ENCODE measurements at regions of chr5 and their contacts with region 1.

Region 1: DNA sequence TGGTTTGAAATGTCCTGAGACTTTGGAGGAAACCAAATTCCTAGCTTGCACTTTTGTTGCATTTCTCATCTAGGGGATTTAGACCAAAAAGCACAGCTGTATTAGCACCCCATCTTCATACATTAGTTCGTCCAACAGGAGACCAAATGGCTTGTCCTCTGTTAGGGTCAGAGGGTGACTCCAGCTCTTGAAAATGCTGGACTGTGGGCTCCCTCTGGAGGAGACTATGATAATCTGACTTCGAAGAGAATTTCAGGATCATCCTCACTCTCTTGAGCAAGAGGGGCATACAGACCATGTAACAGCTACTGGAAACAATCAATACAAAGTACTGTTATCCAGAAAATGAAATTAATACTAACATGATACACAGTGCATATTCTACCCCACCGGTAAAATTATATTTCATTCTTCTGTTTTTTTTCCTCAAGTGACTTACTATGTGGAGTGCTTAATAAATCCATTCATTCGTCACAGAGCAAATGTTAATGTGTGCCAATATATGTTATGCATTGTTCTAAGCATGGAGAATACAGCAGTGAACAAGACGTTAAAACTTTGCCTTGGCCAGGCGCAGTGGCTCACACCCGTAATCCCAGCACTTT is 63.7 kb upstream of the PPP2CA start:
- DNase-seq: peak; percentile 89
- H3K4me3 Mint-ChIP-seq: no peak overlapping the region
- H3K27ac Mint-ChIP-seq: no peak overlapping the region
- H3K4me1 Mint-ChIP-seq: no peaks in the 10 kb centered on the region
- H3K27me3 Mint-ChIP-seq: peaks cover 17% of the 10 kb centered on the region
- CTCF ChIP-seq: peak; percentile 95

Region 2: DNA sequence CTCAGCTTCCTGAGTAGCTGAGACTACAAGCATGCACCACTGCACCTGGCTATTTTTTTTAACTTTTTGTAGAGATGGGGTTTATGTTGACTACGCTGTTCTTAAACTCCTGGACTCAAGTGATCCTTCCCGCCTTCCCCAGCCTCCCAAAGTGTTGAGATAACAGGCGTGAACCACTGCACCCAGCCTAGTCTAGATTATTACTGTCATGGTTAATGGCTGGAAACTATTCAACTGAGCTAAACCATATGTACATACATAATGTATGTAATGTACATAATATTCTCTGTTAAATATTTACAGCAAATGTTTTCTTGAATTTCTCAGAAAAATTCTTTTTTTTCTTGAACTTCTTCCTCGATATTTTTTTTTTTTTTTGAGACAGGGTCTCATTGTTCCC is 85.0 kb before region 1 on chr5:
- CTCF ChIA-PET with region 1: interaction called, 35 read pairs
- POLR2A ChIA-PET with region 1: interaction called, 4 read pairs
- intact Hi-C with region 1: no loop called
- DNase-seq: no peak
- H3K4me3 Mint-ChIP-seq: no peak overlapping the region
- H3K27ac Mint-ChIP-seq: no peak overlapping the region
- H3K4me1 Mint-ChIP-seq: peaks cover 23% of the 10 kb centered on the region
- H3K27me3 Mint-ChIP-seq: no peaks in the 10 kb centered on the region
- CTCF ChIP-seq: no peak

Region 3: GRCh38 chr5:134209477-134210240 is 80.0 kb before region 1 on chr5:
- CTCF ChIA-PET with region 1: interaction called, 35 read pairs
- POLR2A ChIA-PET with region 1: interaction called, 4 read pairs
- intact Hi-C with region 1: no loop called
- DNase-seq: no peak
- H3K4me3 Mint-ChIP-seq: no peak overlapping the region
- H3K27ac Mint-ChIP-seq: no peak overlapping the region
- H3K4me1 Mint-ChIP-seq: peaks cover 15% of the 10 kb centered on the region
- H3K27me3 Mint-ChIP-seq: no peaks in the 10 kb centered on the region
- CTCF ChIP-seq: no peak

Region 4: DNA sequence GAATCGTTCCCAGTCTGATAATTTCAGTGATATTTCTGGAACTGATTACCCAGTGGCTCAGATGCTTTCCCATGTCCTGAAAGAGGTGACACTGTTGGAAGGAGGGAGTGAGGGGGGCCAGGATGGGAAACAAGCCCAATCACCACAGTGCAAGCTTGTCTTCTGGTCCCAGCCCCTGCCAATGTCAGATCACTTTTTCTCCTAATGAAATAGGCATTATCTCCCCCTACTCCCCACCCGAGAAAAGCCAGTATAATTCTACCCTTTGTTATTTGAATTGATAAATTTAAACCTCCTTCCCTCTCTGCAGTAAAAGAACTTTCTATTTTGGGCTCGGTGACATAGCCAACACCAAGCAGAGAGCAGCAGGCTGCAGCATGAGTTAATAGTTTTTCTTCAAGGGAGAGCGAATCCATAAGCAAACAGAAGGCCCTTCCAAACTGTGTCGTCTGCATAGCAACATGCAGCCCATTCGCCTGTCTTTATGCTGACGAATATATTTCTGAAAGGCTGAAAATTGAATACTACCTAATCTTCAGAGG is 49.1 kb before region 1 on chr5:
- CTCF ChIA-PET with region 1: interaction called, 10 read pairs
- POLR2A ChIA-PET with region 1: interaction called, 4 read pairs
- intact Hi-C with region 1: no loop called
- DNase-seq: no peak
- H3K4me3 Mint-ChIP-seq: no peak overlapping the region
- H3K27ac Mint-ChIP-seq: no peak overlapping the region
- H3K4me1 Mint-ChIP-seq: peaks cover 7% of the 10 kb centered on the region
- H3K27me3 Mint-ChIP-seq: no peaks in the 10 kb centered on the region
- CTCF ChIP-seq: no peak

Region 5: GRCh38 chr5:134345996-134346395 is 56.4 kb after region 1 on chr5:
- CTCF ChIA-PET with region 1: no interaction called
- POLR2A ChIA-PET with region 1: no interaction called
- intact Hi-C with region 1: no loop called
- DNase-seq: no peak
- H3K4me3 Mint-ChIP-seq: no peak overlapping the region
- H3K27ac Mint-ChIP-seq: no peak overlapping the region
- H3K4me1 Mint-ChIP-seq: peaks cover 6% of the 10 kb centered on the region
- H3K27me3 Mint-ChIP-seq: no peaks in the 10 kb centered on the region
- CTCF ChIP-seq: no peak

Region 6: GRCh38 chr5:134411546-134412266 is 122.1 kb after region 1 on chr5 and contains the start of gene CDKN2AIPNL:
- CTCF ChIA-PET with region 1: no interaction called
- POLR2A ChIA-PET with region 1: no interaction called
- intact Hi-C with region 1: no loop called
- DNase-seq: peak; percentile 93
- H3K4me3 Mint-ChIP-seq: peak within 1 kb of the TSS; percentile 96
- H3K27ac Mint-ChIP-seq: peak within 1 kb of the TSS; percentile 91
- H3K4me1 Mint-ChIP-seq: peaks cover 37% of the 10 kb centered on the region
- H3K27me3 Mint-ChIP-seq: no peaks in the 10 kb centered on the region
- CTCF ChIP-seq: peak; percentile 79
- total RNA-seq, gene CDKN2AIPNL: 75.1 and 82.4 TPM in 2 replicates

Region 7: DNA sequence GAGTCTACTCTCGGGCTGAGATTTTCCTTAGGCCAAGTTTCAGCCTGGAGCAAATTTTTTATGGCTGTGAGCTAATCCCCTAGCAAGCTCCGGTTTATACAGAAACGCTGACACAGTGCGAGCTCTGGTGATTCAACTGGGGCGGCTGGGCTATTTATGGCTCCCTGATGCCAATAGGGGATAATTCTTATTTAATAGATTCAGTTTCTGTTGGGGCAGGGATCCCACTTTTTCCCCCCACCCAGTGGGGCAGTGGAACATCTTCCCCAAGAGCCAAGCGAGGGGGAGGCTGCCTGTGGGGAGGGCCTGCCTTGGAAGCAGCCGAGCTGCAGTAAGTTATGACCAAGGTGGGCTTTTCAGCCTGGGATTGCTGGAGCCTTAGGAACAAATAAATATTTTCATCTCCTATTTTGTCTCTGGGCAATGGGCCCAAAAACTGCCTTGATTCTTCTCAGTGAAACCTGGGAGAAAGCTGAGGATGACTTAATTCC is 980.4 kb after region 1 on chr5:
- CTCF ChIA-PET with region 1: no interaction called
- POLR2A ChIA-PET with region 1: no interaction called
- intact Hi-C with region 1: no loop called
- DNase-seq: no peak
- H3K4me3 Mint-ChIP-seq: no peak overlapping the region
- H3K27ac Mint-ChIP-seq: no peak overlapping the region
- H3K4me1 Mint-ChIP-seq: no peaks in the 10 kb centered on the region
- H3K27me3 Mint-ChIP-seq: no peaks in the 10 kb centered on the region
- CTCF ChIP-seq: no peak